ENCODE measurements at regions of chr9 and their contacts with region 1.

Region 1: DNA sequence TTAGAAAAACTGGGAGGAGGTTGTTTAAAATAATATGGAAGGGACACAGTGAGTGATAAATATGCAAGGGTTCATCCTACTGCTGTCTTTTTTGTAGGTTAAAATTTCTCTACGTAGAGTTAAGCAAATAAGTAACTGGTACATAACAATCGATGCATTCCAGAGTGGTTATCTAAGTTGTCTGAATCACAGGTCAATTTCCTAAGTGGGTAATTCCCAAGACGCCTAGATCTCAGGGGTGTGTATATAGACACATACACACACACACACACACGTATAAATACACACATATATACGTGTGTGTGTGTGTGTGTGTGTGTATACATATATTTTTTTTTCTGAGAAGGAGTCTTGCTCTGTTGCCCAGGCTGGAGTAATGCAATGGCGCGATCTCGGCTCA is 22.3 kb downstream of the CAAP1 start:
- DNase-seq: no peak
- ATAC-seq: no peak
- H3K4me3 ChIP-seq: no peak overlapping the region
- H3K27ac ChIP-seq: no peak overlapping the region
- H3K4me1 ChIP-seq: no peaks in the 10 kb centered on the region
- H3K27me3 ChIP-seq: no peaks in the 10 kb centered on the region
- CTCF ChIP-seq: no peak

Region 2: DNA sequence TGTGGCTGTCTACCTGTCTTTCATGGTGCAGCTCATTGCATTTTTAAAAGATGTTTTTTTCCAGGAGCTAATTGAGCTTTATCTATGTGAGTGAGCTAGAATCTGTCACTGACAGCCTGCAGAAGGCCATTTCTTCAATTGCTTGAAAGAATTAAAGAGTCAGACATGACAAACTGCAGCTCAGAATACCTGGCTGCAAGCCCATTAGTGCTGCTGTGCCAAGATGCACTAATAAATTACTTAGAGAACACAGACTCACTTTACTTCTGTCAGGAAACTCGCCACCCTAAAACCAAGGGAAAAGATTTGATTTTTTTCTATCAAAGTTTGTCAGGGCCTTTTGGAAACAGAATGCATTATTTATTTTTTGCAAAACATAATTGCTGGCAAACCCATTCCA is 346.0 kb before region 1 on chr9:
- intact Hi-C with region 1: no loop called
- DNase-seq: no peak
- ATAC-seq: no peak
- H3K4me3 ChIP-seq: no peak overlapping the region
- H3K27ac ChIP-seq: no peak overlapping the region
- H3K4me1 ChIP-seq: no peaks in the 10 kb centered on the region
- H3K27me3 ChIP-seq: no peaks in the 10 kb centered on the region
- CTCF ChIP-seq: no peak

Region 3: GRCh38 chr9:26919698-26920097 is 49.4 kb after region 1 on chr9:
- intact Hi-C with region 1: loop called in 1 of 2 experiments (anchors 5 kb)
- DNase-seq: no peak
- ATAC-seq: no peak
- H3K4me3 ChIP-seq: no peak overlapping the region
- H3K27ac ChIP-seq: no peak overlapping the region
- H3K4me1 ChIP-seq: no peaks in the 10 kb centered on the region
- H3K27me3 ChIP-seq: no peaks in the 10 kb centered on the region
- CTCF ChIP-seq: no peak